Keratinocyte (primary cell): ENCODE measurements at regions of chr4 and their contacts with region 1.

Region 1: DNA sequence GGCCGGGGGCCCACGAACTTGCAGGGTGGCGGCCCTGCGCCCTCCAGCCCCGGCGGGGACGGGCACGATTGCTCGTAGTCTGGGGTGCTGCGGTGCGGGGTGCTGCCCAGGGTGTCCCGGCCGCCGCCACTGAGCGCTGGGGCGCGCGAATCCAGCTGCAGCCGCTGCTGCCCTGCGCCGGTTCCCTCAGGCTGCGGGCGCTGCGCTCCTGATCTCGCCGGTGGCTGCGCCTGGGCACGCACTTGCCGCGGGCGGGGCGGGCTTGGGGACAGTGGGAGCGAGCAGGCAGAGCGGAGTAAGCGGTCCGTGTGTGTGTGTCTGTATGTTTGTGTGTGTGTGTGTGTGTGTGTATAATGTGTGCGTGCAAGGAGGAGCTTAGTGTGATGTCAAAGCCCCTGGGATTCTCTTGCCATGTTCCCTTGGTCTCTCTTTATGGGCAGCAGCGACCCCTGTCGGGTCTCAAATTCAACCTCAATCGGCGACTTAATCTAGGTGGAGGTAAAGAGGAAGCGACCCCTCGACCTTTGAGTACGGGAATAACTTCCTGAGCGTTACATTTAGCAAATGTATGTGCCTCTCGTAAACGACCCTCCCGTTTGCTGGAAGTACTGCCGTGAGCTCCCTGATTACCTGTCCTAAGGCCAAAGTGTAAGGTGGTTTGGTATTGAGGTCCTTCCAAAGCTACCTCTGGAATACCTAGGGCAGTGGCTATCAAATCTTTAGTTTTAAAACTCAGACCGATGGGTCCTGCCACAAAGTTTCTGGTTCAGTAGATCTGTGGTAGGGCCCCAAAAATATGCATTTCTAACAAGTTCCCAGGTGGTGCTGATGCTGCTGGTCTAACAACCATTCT is at the start of gene RNF150:
- DNase-seq: peak; percentile 21
- H3K4me3 ChIP-seq: peak within 1 kb of the TSS; percentile 47 to 71 (median 71)
- H3K27ac ChIP-seq: no peak within 1 kb of the TSS
- H3K4me1 ChIP-seq: peaks cover 3% of the 10 kb centered on the region
- H3K27me3 ChIP-seq: peaks cover 28% of the 10 kb centered on the region
- CTCF ChIP-seq: peak; percentile 62 to 71 (median 63)
- polyA plus RNA-seq, gene RNF150: 0.02 to 0.18 TPM (median 0.09 TPM) in 3 replicates

Region 2: GRCh38 chr4:140884431-140885058 is 248.8 kb before region 1 on chr4:
- dilution Hi-C with region 1: loop called (anchors 25 kb)
- DNase-seq: peak; percentile 7
- H3K4me3 ChIP-seq: no peak overlapping the region
- H3K27ac ChIP-seq: no peak overlapping the region
- H3K4me1 ChIP-seq: no peaks in the 10 kb centered on the region
- H3K27me3 ChIP-seq: peaks cover 3% of the 10 kb centered on the region
- CTCF ChIP-seq: peak; percentile 73 to 84 (median 80)